ENCODE measurements at regions of chr17 and their contacts with region 1.

Region 1: DNA sequence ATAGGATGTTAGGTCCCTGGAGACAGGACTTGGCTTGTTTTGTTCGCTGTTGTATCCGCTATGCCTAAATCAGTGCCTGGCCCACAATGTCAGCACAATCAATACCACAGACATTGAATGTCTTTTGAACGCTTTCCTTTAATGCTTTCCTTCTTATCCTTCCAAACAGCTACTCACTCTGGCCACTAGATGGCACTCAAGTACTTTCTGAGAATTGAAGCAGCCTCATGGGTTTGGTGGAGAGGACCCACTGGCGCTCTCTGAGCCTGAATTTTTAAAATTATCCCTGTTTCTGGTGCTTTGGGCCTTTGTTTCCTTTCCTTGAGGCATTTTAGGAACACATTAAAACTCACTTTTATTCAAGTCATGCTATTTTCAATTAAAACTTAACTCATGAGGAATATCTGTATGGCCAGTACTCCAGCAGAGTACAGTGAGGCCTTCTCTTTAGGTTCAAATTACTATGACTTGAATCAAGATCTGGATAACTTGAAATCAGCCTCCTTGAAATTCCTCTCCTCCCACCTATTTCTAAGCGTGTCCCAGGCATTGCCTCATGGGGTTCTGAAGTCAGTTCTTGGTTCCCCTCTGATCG is 3.2 kb upstream of the NLRP1 start:
- DNase-seq: peak; percentile 62
- ATAC-seq: no peak
- H3K4me3 Mint-ChIP-seq: no peak overlapping the region
- H3K27ac Mint-ChIP-seq: peak overlapping the region; percentile 42
- H3K4me1 Mint-ChIP-seq: peaks cover 37% of the 10 kb centered on the region
- H3K27me3 Mint-ChIP-seq: peaks cover 15% of the 10 kb centered on the region

Region 2: GRCh38 chr17:5706577-5707216 is 119.2 kb after region 1 on chr17:
- CTCF ChIA-PET with region 1: interaction called, 27 read pairs
- DNase-seq: peak; percentile 64
- ATAC-seq: no peak
- H3K4me3 Mint-ChIP-seq: no peak overlapping the region
- H3K27ac Mint-ChIP-seq: no peak overlapping the region
- H3K4me1 Mint-ChIP-seq: no peaks in the 10 kb centered on the region
- H3K27me3 Mint-ChIP-seq: peaks cover 28% of the 10 kb centered on the region

Region 3: DNA sequence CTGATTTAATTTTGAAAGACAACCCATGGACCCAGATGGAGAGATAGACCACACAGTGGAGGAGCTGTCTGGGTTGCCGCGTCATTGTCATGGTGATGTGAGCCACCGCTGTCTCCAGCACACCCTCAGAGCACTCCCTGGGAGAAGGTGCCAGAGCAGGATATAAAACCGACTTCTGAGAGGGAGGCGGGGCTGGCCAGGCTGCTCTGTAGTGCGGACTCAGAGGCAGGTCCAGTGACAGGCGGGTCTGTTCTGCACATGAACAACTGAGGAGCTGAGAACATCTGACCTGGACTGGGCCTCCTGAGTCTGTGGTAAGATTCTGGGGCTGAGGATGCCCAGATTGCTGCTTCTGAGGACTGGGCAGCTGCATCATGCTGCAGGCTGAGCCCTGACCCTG is 213.1 kb after region 1 on chr17:
- CTCF ChIA-PET with region 1: no interaction called
- DNase-seq: no peak
- ATAC-seq: no peak
- H3K4me3 Mint-ChIP-seq: no peak overlapping the region
- H3K27ac Mint-ChIP-seq: no peak overlapping the region
- H3K4me1 Mint-ChIP-seq: no peaks in the 10 kb centered on the region
- H3K27me3 Mint-ChIP-seq: peaks cover 33% of the 10 kb centered on the region

Measured in activated CD8-positive, alpha-beta memory T cell treated with anti-CD3 and anti-CD28 coated beads, Interleukin-2, amount 10 ng/mL, durations not matched to agents 7 days and 5 days (primary cell).